Breast epithelium (tissue), 4 donors: ENCODE measurements at regions of chr9 and their contacts with region 1.

Region 1: GRCh38 chr9:136668983-136669790 is 6.5 kb downstream of the EGFL7 start:
- DNase-seq: no peak
- H3K4me3 ChIP-seq: peak overlapping the region in 2 of 3 donors; percentile 42 to 69
- H3K27ac ChIP-seq: no peak overlapping the region
- H3K4me1 ChIP-seq: peaks cover 0 to 4% of the 10 kb centered on the region in 2 donors
- H3K27me3 ChIP-seq: peaks cover 3 to 45% of the 10 kb centered on the region in 2 donors
- CTCF ChIP-seq: no peak
- POLR2A ChIP-seq: no peak

Region 2: GRCh38 chr9:136693639-136694235 is 24.6 kb after region 1 on chr9:
- intact Hi-C with region 1: loop called (anchors 1 kb)
- DNase-seq: peak; percentile 67 to 79
- H3K4me3 ChIP-seq: no peak overlapping the region
- H3K27ac ChIP-seq: peak overlapping the region; percentile 65 to 79
- H3K4me1 ChIP-seq: no peaks in the 10 kb centered on the region
- H3K27me3 ChIP-seq: no peaks in the 10 kb centered on the region
- CTCF ChIP-seq: no peak
- POLR2A ChIP-seq: no peak

Region 3: DNA sequence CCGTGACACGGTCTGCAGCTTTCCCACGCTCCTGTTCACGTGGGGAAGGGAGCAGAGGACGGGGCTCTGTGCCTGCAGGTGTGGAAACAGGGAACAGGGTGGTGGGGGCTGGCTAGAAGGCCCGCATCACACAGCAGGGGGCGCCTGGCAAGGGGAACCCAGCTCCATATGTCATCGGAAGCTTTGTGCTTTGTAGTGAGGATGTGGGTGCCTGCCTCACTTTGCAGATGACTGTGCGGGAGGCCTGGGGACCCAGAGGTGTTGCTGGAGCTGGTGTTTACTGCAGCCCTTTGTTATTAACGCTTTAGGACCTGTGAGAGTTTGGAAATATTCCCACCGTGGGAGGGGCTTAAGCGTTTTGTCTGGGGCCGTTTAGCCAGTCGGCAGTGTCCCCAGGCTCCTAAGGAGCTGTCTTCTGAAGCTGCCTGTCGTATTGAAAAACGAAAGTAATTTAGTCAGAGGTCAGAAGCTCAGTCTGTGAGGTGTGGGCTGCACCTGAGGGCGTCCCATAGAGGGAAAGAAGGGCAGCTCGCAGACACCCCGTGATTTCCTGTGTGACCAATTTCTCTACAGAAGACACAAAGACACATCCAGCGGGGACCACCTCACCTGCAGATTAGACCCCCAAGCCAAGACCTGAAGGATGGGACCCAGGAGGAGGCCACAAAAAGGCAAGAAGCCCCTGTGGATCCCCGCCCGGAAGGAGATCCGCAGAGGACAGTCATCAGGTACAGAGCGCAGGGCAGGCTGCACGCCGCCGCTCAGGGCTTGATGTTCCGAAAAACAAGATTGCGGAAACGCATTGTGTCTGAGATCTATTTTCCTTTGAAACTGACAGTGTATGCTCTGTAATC is 426.7 kb after region 1 on chr9:
- intact Hi-C with region 1: no loop called
- DNase-seq: no peak
- H3K4me3 ChIP-seq: no peak overlapping the region
- H3K27ac ChIP-seq: no peak overlapping the region
- H3K4me1 ChIP-seq: no peaks in the 10 kb centered on the region
- H3K27me3 ChIP-seq: no peaks in the 10 kb centered on the region
- CTCF ChIP-seq: no peak
- POLR2A ChIP-seq: no peak